PC-9 (cell line): ENCODE measurements at regions of chr5 and their contacts with region 1.

Region 1: GRCh38 chr5:74085186-74085585 is 459.2 kb downstream of the ARHGEF28 start:
- DNase-seq: no peak
- H3K4me3 ChIP-seq: no peak overlapping the region
- H3K27ac ChIP-seq: no peak overlapping the region
- H3K4me1 ChIP-seq: no peaks in the 10 kb centered on the region
- H3K27me3 ChIP-seq: no peaks in the 10 kb centered on the region
- CTCF ChIP-seq: no peak

Region 2: GRCh38 chr5:74030371-74030770 is 54.8 kb before region 1 on chr5:
- CTCF ChIA-PET with region 1: no interaction called
- POLR2A ChIA-PET with region 1: interaction called, 18 read pairs
- intact Hi-C with region 1: no loop called
- DNase-seq: no peak
- H3K4me3 ChIP-seq: no peak overlapping the region
- H3K27ac ChIP-seq: no peak overlapping the region
- H3K4me1 ChIP-seq: peaks cover 12% of the 10 kb centered on the region
- H3K27me3 ChIP-seq: no peaks in the 10 kb centered on the region
- CTCF ChIP-seq: no peak

Region 3: GRCh38 chr5:74139589-74139988 is 54.4 kb after region 1 on chr5:
- CTCF ChIA-PET with region 1: no interaction called
- POLR2A ChIA-PET with region 1: interaction called, 17 read pairs
- intact Hi-C with region 1: no loop called
- DNase-seq: no peak
- H3K4me3 ChIP-seq: no peak overlapping the region
- H3K27ac ChIP-seq: no peak overlapping the region
- H3K4me1 ChIP-seq: peaks cover 6% of the 10 kb centered on the region; the same call in 1 of the 2 replicates
- H3K27me3 ChIP-seq: no peaks in the 10 kb centered on the region
- CTCF ChIP-seq: no peak